ENCODE measurements at regions of chr11 and their contacts with region 1.

Region 1: GRCh38 chr11:61091373-61092279 is 10.7 kb upstream of the CD5 start:
- DNase-seq: no peak
- H3K4me3 ChIP-seq: no peak overlapping the region
- H3K27ac ChIP-seq: no peak overlapping the region
- H3K4me1 ChIP-seq: no peaks in the 10 kb centered on the region
- H3K27me3 ChIP-seq: no peaks in the 10 kb centered on the region
- CTCF ChIP-seq: no peak
- POLR2A ChIP-seq: no peak

Region 2: DNA sequence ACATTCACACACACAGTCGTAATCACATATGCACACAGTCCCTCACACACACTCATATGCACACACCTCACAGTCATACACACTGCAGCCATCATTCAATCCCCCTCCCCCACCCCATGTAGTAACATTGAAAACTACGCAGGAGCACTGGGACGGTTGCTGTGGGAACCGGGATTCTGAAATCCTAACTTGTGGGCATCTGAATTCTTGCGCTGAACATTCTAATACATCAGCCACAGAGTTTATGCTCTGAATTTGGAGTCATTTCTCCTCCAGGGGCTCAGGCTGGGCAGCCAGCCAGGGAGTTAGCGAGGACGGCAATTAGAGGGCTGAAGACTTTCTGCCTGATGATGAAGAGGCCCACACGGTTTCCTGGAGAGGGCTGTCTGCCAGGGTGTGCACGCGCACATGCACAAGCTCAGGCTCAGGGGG is 87.4 kb before region 1 on chr11:
- CTCF ChIA-PET with region 1: no interaction called
- POLR2A ChIA-PET with region 1: no interaction called
- dilution Hi-C with region 1: no loop called
- intact Hi-C with region 1: no loop called
- DNase-seq: no peak
- H3K4me3 ChIP-seq: no peak overlapping the region
- H3K27ac ChIP-seq: no peak overlapping the region
- H3K4me1 ChIP-seq: no peaks in the 10 kb centered on the region
- H3K27me3 ChIP-seq: peaks cover 31 to 37% of the 10 kb centered on the region in 2 experiments
- CTCF ChIP-seq: no peak
- POLR2A ChIP-seq: no peak

Region 3: DNA sequence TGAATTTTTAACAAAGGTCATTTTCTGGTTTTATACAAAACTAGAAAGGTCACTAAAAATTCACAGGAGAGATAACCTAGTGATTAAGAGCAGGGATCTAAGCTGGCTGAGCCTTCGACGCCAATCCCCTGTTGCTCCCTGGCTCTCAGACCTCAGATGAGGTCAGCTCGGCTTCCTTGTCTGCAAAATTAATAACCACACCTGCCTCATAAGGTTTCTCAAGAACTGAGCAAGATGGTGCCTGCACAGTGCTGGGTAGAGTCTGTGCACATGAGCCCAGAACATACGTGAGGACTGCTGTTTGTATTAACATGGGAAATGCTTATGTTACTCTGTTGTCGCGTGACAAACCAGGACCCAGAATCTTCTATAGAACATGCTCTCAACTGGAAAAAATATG is 13.7 kb before region 1 on chr11:
- CTCF ChIA-PET with region 1: interaction called, 4 read pairs
- POLR2A ChIA-PET with region 1: no interaction called
- dilution Hi-C with region 1: no loop called
- intact Hi-C with region 1: loop called (anchors 1 kb)
- DNase-seq: no peak
- H3K4me3 ChIP-seq: no peak overlapping the region
- H3K27ac ChIP-seq: no peak overlapping the region
- H3K4me1 ChIP-seq: no peaks in the 10 kb centered on the region
- H3K27me3 ChIP-seq: peaks cover 8 to 13% of the 10 kb centered on the region in 2 experiments
- CTCF ChIP-seq: no peak
- POLR2A ChIP-seq: no peak

Region 4: GRCh38 chr11:61173456-61173855 is 81.8 kb after region 1 on chr11:
- CTCF ChIA-PET with region 1: no interaction called
- POLR2A ChIA-PET with region 1: no interaction called
- dilution Hi-C with region 1: no loop called
- intact Hi-C with region 1: no loop called
- DNase-seq: peak; percentile 21
- H3K4me3 ChIP-seq: no peak overlapping the region
- H3K27ac ChIP-seq: no peak overlapping the region
- H3K4me1 ChIP-seq: no peaks in the 10 kb centered on the region
- H3K27me3 ChIP-seq: peaks cover 5 to 18% of the 10 kb centered on the region in 2 experiments
- CTCF ChIP-seq: no peak
- POLR2A ChIP-seq: no peak

Measured in endothelial cell of umbilical vein (primary cell).